K562 (cell line): ENCODE measurements at regions of chr22 and their contacts with region 1.

Region 1: DNA sequence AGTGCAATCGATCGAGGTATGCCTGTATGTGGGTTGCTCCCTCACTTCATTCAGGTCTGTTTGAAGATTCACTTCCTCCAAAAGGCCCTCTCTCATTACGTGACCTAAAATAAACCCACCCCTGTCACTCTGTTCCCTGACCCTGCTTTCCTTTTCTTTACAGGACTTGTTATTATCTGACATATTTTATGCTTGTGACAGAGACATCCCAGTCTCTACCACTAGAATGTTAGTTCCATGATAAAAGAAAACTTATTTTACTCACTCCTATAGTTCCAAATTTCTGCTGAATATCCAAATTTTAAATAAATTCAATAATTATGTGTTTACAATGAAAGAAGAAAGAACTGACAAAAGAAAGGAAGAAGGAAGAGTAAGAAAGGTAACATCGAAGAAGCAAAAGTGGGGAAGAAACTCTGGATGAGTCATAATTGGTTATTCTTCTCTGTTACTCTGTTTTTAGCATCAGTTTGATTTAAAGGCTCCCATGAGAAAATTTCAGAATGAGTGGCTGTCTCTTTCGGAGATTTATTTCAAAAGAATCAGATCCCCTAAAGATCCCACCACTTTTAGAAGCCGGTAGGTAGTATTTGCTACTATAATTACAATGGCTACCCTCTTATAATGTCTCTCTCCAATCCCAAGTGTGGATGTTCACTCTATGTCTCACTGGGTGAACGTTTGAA is 33.5 kb downstream of the ENTHD1 start:
- DNase-seq: no peak
- ATAC-seq: no peak
- H3K4me3 ChIP-seq: no peak overlapping the region
- H3K27ac ChIP-seq: peak overlapping the region; percentile 23; the same call in 2 of the 3 replicates
- H3K4me1 ChIP-seq: peaks cover 2 to 4% of the 10 kb centered on the region in 2 experiments; a peak in 4 of 5 replicates
- H3K27me3 ChIP-seq: no peaks in the 10 kb centered on the region
- CTCF ChIP-seq: no peak
- EP300 ChIP-seq: no peak
- POLR2A ChIP-seq: no peak
- RAD21 ChIP-seq: no peak

Region 2: GRCh38 chr22:39456262-39457197 is 403.5 kb before region 1 on chr22 and contains the start of gene MGAT3:
- CTCF ChIA-PET with region 1: no interaction called
- POLR2A ChIA-PET with region 1: no interaction called
- in situ Hi-C with region 1: no loop called
- intact Hi-C with region 1: no loop called
- DNase-seq: no peak
- ATAC-seq: no peak
- H3K4me3 ChIP-seq: peak within 1 kb of the TSS; percentile 59
- H3K27ac ChIP-seq: peak within 1 kb of the TSS; percentile 67; the same call in 2 of the 3 replicates
- H3K4me1 ChIP-seq: peaks cover 36 to 73% of the 10 kb centered on the region in 2 experiments; a peak in 4 of 5 replicates
- H3K27me3 ChIP-seq: no peaks in the 10 kb centered on the region
- CTCF ChIP-seq: no peak
- EP300 ChIP-seq: no peak
- POLR2A ChIP-seq: no peak
- RAD21 ChIP-seq: no peak
- polyA plus RNA-seq, gene MGAT3: 0.10 to 0.18 TPM

Region 3: DNA sequence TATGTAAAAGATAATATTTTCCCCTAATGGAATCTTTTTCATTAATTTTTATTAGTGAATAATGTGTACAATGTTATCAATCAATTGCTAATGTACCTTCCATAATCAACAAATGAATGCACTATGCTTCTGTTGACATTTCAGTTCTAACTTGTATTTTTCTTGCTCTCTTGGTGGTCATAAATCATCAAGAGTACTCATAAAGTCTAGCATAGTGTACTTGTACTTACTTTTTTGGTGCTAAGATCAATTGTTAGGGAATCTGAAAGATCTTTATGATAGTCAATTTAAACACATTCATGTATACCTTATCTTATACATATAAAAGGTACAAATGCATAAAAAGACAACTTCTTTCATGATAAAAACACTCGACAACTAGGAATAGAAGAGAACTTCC is 23.0 kb after region 1 on chr22:
- CTCF ChIA-PET with region 1: no interaction called
- POLR2A ChIA-PET with region 1: no interaction called
- in situ Hi-C with region 1: no loop called
- intact Hi-C with region 1: no loop called
- DNase-seq: no peak
- ATAC-seq: no peak
- H3K4me3 ChIP-seq: no peak overlapping the region
- H3K27ac ChIP-seq: peak overlapping the region; percentile 11; the same call in 1 of the 3 replicates
- H3K4me1 ChIP-seq: peaks cover 0 to 5% of the 10 kb centered on the region in 2 experiments; a peak in 1 of 5 replicates
- H3K27me3 ChIP-seq: no peaks in the 10 kb centered on the region
- CTCF ChIP-seq: no peak
- EP300 ChIP-seq: no peak
- POLR2A ChIP-seq: no peak
- RAD21 ChIP-seq: no peak

Region 4: DNA sequence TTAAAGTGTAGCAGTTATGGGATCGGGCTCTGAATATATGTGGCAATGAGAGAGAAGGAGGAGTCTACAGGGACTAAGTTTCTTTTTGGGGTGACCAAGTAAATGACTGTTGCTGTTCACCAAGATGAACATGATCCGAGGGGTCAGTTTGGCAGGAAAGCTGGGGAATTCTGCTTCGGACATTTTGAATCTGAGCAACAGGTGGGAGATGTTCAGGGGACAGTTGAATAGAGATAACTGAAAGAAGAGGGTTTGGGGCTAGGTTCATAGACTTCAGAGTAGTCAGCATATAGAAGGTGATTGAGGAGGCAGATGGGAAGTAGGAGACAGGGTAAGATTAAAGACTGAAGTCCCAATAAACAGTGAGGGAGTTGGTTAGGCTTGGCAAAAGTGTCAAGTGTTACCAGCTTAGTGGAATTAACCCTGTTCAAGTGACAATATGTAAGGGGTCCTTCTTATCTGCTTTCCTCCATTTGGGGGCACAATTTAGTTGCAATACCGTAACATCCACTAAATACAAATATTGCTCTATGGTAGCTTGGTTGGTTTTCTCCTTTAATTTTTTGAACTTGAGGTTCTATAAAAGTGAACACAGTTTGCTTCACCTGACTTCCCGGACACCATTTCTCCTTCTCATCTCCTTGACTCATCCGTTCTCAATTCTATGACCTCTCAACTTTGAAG is 36.4 kb after region 1 on chr22:
- CTCF ChIA-PET with region 1: no interaction called
- POLR2A ChIA-PET with region 1: no interaction called
- in situ Hi-C with region 1: no loop called
- intact Hi-C with region 1: no loop called
- DNase-seq: no peak
- ATAC-seq: no peak
- H3K4me3 ChIP-seq: no peak overlapping the region
- H3K27ac ChIP-seq: no peak overlapping the region
- H3K4me1 ChIP-seq: peaks cover 5 to 9% of the 10 kb centered on the region in 2 experiments; a peak in 1 of 5 replicates
- H3K27me3 ChIP-seq: no peaks in the 10 kb centered on the region
- CTCF ChIP-seq: no peak
- EP300 ChIP-seq: no peak
- POLR2A ChIP-seq: no peak
- RAD21 ChIP-seq: no peak

Region 5: DNA sequence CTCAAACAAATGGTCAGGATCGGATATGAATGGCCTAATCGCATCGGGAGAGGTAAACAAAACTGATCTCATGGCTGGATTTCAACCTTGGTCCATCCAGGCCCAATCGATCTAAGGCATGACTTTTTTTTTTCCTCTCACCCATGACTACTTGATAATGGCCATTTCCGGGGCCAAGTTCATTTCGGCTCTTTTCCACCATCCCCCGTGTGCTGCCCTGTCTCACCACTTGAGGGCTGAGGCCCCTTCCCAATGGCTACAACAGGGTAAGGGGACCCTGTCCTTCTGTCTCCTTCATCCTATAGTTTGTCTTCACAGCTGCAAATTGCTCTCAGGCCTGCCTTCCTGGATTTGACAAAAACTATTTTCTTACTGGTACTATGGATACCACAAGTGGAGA is 67.5 kb after region 1 on chr22:
- CTCF ChIA-PET with region 1: no interaction called
- POLR2A ChIA-PET with region 1: no interaction called
- in situ Hi-C with region 1: no loop called
- intact Hi-C with region 1: loop called (anchors 10 kb)
- DNase-seq: peak in 3 of 4 experiments; percentile 31 to 68 (median 46)
- ATAC-seq: peak; percentile 92
- H3K4me3 ChIP-seq: no peak overlapping the region
- H3K27ac ChIP-seq: peak overlapping the region; percentile 36; the same call in 2 of the 3 replicates
- H3K4me1 ChIP-seq: peaks cover 11 to 44% of the 10 kb centered on the region in 2 experiments; a peak in 4 of 5 replicates
- H3K27me3 ChIP-seq: no peaks in the 10 kb centered on the region
- CTCF ChIP-seq: peak; percentile 27 to 65 (median 49); a peak in 5 of 6 replicates
- EP300 ChIP-seq: 0 out of 2 replicates have a peak, but pooled peaks have one; percentile 12
- POLR2A ChIP-seq: no peak
- RAD21 ChIP-seq: peak in 1 of 2 experiments; percentile 60; a peak in 2 of 4 replicates